ENCODE measurements at regions of chr3 and their contacts with region 1.

Region 1: GRCh38 chr3:133949438-133949837 is 53.8 kb upstream of the RAB6B start:
- DNase-seq: peak; percentile 88
- H3K4me3 ChIP-seq: no peak overlapping the region
- H3K27ac ChIP-seq: no peak overlapping the region
- H3K4me1 ChIP-seq: peaks cover 42% of the 10 kb centered on the region
- H3K27me3 ChIP-seq: no peaks in the 10 kb centered on the region
- CTCF ChIP-seq: no peak
- POLR2A ChIP-seq: no peak

Region 2: DNA sequence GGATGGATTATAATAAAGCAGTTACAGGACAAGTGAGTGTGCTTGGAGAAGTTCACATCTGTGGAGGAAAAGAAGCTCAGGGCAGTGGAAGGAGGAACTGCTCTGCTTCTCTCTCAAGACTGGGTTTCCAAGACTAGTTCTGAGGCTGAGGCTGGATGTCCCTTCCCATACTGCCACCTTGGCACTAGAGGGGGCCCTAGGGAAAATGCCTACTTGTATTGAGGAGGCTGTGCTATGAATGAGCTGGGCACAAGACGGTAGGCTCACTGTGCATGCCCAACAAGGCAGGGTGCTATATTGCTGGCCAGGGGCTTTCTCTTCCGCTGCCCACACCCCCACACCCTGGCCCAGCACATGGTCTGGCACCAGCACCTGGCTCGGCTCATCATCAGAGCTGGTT is 15.1 kb after region 1 on chr3:
- CTCF ChIA-PET with region 1: interaction called, 17 read pairs
- POLR2A ChIA-PET with region 1: interaction called, 4 read pairs
- dilution Hi-C with region 1: no loop called
- intact Hi-C with region 1: no loop called
- DNase-seq: no peak
- H3K4me3 ChIP-seq: no peak overlapping the region
- H3K27ac ChIP-seq: no peak overlapping the region
- H3K4me1 ChIP-seq: peaks cover 15% of the 10 kb centered on the region
- H3K27me3 ChIP-seq: no peaks in the 10 kb centered on the region
- CTCF ChIP-seq: peak; percentile 27 to 31
- POLR2A ChIP-seq: no peak